Dendritic cell treated with granulocyte-macrophage colony-stimulating factor and Interleukin-4, amounts not matched to agents 40 ng/mL and 50 ng/mL, for 4 days (primary cell): ENCODE measurements at regions of chr1 and their contacts with region 1.

Region 1: DNA sequence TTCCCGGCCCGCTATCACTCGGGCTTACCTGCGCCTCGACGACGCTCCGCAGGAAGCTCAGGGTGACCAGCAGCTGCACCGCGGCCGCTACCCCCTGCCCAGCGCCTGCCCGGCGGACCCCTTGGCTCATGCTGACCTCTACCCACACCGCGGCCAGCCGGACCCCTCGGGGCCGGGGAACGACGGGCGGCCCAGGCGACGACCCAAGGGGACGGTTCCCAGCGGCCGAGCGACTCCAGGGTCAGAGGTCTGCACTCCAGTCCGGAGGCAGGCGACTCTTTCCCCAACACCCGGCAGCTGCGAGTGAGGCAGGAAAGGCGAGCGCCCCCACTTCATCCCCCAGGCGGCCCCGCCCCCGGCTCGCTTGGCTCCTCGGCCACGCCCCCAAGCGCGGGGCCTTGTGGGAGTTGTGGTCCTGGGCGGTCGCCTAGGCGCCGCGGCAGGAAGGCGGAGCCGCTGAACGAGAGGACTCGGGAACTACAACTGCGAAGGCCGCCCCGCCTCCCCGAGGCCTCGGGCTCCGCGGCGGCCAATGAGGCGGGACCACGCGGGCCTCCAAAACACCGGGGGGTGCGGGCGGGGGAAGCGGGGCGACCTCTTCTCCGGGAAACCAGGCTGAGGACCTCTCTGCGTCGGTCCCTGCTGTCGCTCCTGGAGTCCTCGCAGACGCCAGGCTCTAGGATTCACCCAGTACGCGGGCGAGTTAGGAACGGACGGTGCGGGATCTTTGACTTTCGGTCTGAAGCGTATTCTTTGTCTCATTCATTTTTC is at the start of gene ERO1B:
- H3K4me3 Mint-ChIP-seq: peak within 1 kb of the TSS; percentile 86
- H3K27ac Mint-ChIP-seq: peak within 1 kb of the TSS; percentile 89
- H3K4me1 Mint-ChIP-seq: peaks cover 41% of the 10 kb centered on the region
- H3K27me3 Mint-ChIP-seq: peaks cover 6% of the 10 kb centered on the region

Region 2: GRCh38 chr1:236523701-236524141 is 241.9 kb after region 1 on chr1 and contains the start of gene LGALS8:
- intact Hi-C with region 1: loop called (anchors 5 kb)
- H3K4me3 Mint-ChIP-seq: peak within 1 kb of the TSS; percentile 98
- H3K27ac Mint-ChIP-seq: peak within 1 kb of the TSS; percentile 98
- H3K4me1 Mint-ChIP-seq: peaks cover 29% of the 10 kb centered on the region
- H3K27me3 Mint-ChIP-seq: no peaks in the 10 kb centered on the region